ENCODE measurements at regions of chr10 and their contacts with region 1.

Region 1: DNA sequence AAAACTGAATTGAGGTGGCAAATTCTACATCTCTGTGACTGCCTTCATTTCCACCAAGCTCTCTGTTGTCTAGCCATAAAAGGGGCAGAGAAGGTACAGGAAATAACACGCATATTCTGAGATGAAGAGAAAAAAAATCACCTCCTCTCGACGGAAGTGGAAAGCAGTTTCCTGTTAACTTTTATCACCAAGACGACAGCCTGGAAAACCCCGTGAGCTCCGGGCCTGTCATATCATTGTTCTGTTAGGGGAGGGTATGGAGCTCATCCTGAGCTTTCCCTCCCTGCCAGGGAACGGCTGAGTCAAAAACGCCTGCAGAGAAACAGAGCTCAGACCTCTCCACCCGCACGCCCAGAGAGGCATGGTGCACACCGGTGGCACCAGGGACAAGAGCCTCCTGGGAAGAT is 200.3 kb downstream of the PRPF18 start:
- DNase-seq: peak; percentile 92
- H3K4me3 Mint-ChIP-seq: peak overlapping the region; percentile 45
- H3K27ac Mint-ChIP-seq: peak overlapping the region; percentile 93
- H3K4me1 Mint-ChIP-seq: peaks cover 33% of the 10 kb centered on the region
- H3K27me3 Mint-ChIP-seq: no peaks in the 10 kb centered on the region

Region 2: DNA sequence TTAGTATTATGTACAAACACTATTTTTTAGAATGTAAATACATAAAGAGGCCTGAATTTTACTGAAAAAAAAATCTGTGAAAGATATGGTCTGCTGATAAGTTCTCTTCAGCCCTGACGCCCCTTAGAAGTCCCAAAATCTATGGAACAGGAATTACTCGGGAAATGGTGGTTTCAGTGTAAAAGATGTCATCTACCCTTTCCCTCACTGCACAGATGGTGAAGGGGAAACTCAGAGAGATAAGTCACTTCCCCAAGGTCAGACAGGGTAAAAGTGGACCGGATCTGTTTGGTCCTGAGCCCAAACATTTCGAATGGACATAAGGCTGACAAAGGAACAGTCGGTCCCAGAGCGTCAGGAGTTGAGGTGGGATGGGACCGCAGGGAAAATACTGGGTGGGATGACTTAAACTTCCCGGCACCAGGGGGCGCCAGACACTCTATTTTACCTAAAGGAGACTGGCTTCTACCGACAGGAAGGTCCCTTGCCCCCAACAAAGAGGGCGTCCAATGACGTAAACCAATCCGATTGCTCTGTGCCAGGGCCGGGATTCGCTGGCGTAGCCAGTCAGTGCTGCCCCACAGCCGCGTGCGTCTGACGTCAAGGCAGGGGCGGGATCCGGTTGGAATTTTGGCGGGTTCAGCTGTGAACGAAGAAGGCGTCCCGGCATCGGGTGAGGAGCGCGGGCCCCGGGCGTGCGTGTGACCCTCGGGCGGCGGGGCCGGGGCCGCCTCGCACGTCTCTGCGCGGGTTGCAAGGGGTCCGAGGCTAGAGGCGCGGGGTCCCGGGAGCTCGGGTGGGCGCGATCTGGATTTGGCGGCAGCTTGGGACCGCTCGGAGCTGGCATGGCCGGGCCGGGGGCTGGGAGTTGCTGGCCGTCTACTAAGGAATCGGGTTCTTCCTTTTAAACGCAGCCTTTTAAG is 625.8 kb before region 1 on chr10 and contains the start of gene MCM10:
- CTCF ChIA-PET with region 1: no interaction called
- intact Hi-C with region 1: loop called (anchors 5 kb)
- DNase-seq: peak; percentile 99
- H3K4me3 Mint-ChIP-seq: peak within 1 kb of the TSS; percentile 88
- H3K27ac Mint-ChIP-seq: peak within 1 kb of the TSS; percentile 63
- H3K4me1 Mint-ChIP-seq: peaks cover 27% of the 10 kb centered on the region
- H3K27me3 Mint-ChIP-seq: peaks cover 2% of the 10 kb centered on the region
- total RNA-seq, gene MCM10: 76.9 to 81.1 TPM

Region 3: GRCh38 chr10:13659897-13660550 is 127.0 kb before region 1 on chr10:
- CTCF ChIA-PET with region 1: interaction called, 12 read pairs
- intact Hi-C with region 1: no loop called
- DNase-seq: peak; percentile 82
- H3K4me3 Mint-ChIP-seq: no peak overlapping the region
- H3K27ac Mint-ChIP-seq: no peak overlapping the region
- H3K4me1 Mint-ChIP-seq: peaks cover 16% of the 10 kb centered on the region
- H3K27me3 Mint-ChIP-seq: no peaks in the 10 kb centered on the region

Region 4: DNA sequence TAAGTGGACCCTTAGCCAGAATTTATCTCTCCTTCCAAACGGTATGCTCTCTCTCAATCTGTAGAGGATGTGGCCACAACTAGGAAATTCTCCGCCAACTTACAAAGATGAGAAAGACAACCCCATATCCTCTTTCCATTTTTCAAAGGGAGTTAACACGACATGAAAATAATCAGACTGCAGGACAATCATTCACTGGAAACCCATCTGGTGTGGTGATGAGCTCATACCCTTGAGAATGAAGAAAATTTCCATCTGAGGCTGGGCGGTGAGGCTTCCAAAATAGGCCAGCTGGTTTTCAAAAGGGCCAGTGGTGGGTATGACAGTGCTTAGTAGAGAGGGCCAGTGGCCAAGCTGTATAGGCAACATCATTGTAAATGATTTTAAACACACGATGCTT is 174.1 kb after region 1 on chr10:
- CTCF ChIA-PET with region 1: no interaction called
- intact Hi-C with region 1: no loop called
- DNase-seq: no peak
- H3K4me3 Mint-ChIP-seq: no peak overlapping the region
- H3K27ac Mint-ChIP-seq: no peak overlapping the region
- H3K4me1 Mint-ChIP-seq: peaks cover 11% of the 10 kb centered on the region
- H3K27me3 Mint-ChIP-seq: no peaks in the 10 kb centered on the region

Region 5: DNA sequence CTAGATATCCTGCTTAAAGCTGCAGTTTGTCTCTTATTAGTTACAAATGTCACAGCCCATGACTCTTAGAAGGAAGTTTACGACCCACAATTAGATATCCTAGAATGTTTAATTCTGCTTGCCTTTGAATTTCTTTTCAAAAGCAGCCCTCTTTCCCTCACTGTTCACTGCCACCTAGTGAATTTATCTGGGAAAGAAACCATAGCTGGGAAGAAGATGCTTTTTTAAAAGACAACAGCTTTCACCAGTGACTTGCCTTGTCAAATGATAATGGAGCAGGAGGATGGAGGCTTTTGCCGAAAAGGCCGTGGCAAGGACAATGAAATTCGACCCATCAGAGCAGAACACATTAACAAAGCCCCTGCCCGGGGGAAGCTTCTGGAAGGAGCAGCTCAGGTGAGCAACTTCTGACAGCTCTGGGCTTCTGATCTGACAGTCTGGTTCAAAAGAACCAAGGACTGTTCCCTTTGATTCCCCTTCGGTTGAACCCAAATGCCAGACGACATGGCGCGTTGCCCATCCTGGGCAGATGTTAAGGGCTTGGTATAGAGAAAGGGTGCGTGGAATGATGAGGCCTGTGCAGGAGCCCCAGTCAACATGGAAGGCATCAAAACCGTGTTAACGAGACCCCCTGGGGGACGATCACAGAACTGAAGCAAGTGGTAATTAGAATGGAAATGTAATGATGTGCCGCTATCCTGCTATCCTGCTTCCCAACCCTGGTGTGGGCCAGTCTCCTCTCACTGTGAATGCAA is 306.9 kb after region 1 on chr10:
- CTCF ChIA-PET with region 1: no interaction called
- intact Hi-C with region 1: loop called (anchors 1 kb)
- DNase-seq: no peak
- H3K4me3 Mint-ChIP-seq: no peak overlapping the region
- H3K27ac Mint-ChIP-seq: no peak overlapping the region
- H3K4me1 Mint-ChIP-seq: peaks cover 2% of the 10 kb centered on the region
- H3K27me3 Mint-ChIP-seq: no peaks in the 10 kb centered on the region

Region 6: DNA sequence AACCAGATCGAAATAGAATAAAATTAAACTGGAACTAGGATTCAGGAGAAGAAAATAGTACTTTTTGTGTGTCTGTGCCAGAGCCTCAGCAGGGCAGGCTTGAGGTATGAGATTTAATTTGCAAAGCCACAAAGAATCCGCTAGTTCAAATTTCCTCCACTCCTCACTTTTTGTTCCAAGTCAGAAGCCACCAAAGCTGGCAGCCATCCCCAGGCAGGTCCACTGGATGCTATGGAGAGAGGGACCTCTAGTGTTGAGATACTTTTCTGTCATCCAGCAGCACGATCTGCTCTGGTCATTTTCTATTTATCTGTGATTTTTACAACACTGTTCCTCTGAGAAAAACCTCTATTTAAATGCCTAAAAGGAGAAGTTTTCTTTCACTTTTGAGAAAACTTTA is 691.6 kb after region 1 on chr10:
- CTCF ChIA-PET with region 1: no interaction called
- intact Hi-C with region 1: loop called (anchors 1 kb)
- DNase-seq: peak; percentile 57
- H3K4me3 Mint-ChIP-seq: no peak overlapping the region
- H3K27ac Mint-ChIP-seq: no peak overlapping the region
- H3K4me1 Mint-ChIP-seq: peaks cover 2% of the 10 kb centered on the region
- H3K27me3 Mint-ChIP-seq: peaks cover 5% of the 10 kb centered on the region

Region 7: DNA sequence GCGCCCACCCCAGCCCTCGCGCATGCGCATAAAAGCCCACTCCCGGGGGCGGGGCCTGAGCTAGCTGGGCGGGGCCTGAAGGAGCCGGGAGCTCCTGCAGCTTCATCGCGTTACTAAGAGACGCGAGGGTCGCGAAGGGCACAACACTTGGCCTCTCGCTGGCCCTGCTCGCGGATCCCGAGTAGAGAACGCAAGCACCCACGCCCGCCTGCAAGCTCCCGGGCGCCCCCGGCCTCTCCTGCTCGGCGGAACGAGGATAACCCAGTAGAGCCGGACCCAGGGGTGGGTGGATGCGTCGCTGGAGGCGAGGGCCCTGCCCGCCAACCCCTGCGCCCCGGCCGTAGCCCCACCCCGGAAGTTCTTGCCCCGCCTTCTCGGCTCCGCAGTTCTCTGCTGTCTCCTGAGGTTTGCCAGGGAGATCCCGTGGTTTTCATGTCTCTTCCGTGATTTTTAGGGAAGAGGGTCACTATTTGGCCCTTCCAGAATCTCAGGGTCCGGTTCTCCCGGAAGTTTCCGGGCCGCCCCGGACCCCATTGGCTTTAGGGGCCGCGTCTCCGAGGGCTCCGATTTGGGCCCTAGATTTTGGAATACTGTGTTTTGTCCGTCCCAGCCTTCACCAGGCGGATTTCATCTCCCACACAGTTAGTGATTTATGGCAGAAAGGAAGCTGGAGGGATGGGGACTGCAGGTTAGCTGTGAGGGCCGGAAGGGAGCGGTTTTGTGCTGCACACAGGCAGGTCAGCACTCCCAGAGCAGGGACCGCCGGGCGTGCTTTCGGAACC is 1172.4 kb after region 1 on chr10 and contains the start of gene MEIG1:
- CTCF ChIA-PET with region 1: no interaction called
- intact Hi-C with region 1: loop called (anchors 5 kb)
- DNase-seq: peak; percentile 91
- H3K4me3 Mint-ChIP-seq: peak within 1 kb of the TSS; percentile 98
- H3K27ac Mint-ChIP-seq: peak within 1 kb of the TSS; percentile 98
- H3K4me1 Mint-ChIP-seq: peaks cover 27% of the 10 kb centered on the region
- H3K27me3 Mint-ChIP-seq: no peaks in the 10 kb centered on the region
- total RNA-seq, gene MEIG1: 0.81 to 0.93 TPM